ENCODE measurements at regions of chr2 and their contacts with region 1.

Region 1: DNA sequence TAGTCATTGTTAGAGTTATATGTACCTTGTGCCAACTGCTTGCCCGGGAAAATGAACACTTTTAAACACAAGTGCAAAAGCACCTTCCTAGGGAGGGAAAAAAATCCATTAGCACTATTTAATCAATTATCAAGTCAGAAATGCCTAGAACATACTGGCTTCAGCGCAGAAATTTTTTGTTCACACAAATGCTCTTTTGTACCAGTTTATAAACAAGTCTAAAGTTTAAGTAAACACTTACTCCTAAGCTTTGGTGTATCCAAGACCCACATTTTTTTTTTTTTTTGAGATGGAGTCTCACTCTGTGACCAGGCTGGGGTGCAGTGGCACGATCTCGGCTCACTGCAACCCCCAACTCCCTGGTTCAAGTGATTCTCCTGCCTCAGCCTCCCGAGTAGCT is 30.6 kb downstream of the GFPT1 start:
- DNase-seq: no peak
- ATAC-seq: no peak
- H3K4me3 ChIP-seq: no peak overlapping the region
- H3K27ac ChIP-seq: no peak overlapping the region
- H3K4me1 ChIP-seq: no peaks in the 10 kb centered on the region
- H3K27me3 ChIP-seq: no peaks in the 10 kb centered on the region
- CTCF ChIP-seq: no peak

Region 2: GRCh38 chr2:68605939-68606338 is 750.5 kb before region 1 on chr2:
- intact Hi-C with region 1: no loop called
- DNase-seq: no peak
- ATAC-seq: no peak
- H3K4me3 ChIP-seq: no peak overlapping the region
- H3K27ac ChIP-seq: no peak overlapping the region
- H3K4me1 ChIP-seq: no peaks in the 10 kb centered on the region
- H3K27me3 ChIP-seq: no peaks in the 10 kb centered on the region
- CTCF ChIP-seq: no peak

Region 3: GRCh38 chr2:69973335-69973735 is 616.9 kb after region 1 on chr2:
- intact Hi-C with region 1: loop called in 1 of 2 experiments (anchors 5 kb)
- DNase-seq: no peak
- ATAC-seq: no peak
- H3K4me3 ChIP-seq: no peak overlapping the region
- H3K27ac ChIP-seq: no peak overlapping the region
- H3K4me1 ChIP-seq: no peaks in the 10 kb centered on the region
- H3K27me3 ChIP-seq: no peaks in the 10 kb centered on the region
- CTCF ChIP-seq: no peak

Measured in psoas muscle (tissue), 8 donors.